Right ventricle myocardium inferior (tissue), 1 donor: ENCODE measurements at regions of chr6 and their contacts with region 1.

Region 1: DNA sequence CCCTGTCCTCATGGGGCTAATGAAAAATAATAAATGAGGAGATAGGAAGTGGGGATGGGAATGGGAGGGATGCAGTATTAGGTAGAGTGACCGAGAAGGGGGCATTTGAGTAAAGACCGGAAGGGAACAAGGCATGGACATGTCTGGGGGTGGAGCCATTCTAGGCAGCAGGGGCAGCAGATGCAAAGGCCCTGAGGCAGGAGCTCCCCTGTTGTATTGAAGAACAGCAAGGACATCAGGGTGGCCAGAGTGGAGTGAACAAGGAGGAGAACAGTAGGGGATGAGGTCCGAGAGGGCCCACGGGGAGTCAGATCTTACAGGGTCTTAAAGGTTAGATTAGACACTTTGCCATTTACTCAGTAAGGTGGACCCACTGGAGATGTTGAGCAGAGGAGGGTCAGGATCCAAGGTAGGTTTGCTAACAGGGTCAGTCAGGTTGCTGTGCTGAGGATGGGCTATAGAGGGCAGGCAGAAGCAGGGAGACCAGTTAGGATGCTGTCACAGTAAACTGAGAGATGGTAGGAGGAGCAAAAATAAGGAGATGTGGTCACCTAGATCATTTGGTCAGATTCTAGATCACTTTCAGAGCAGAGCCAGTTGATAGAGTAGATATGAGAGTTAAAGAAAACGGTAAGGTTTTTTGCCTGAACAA is 18.7 kb downstream of the TAF8 start:
- DNase-seq: no peak
- ATAC-seq: no peak

Region 2: DNA sequence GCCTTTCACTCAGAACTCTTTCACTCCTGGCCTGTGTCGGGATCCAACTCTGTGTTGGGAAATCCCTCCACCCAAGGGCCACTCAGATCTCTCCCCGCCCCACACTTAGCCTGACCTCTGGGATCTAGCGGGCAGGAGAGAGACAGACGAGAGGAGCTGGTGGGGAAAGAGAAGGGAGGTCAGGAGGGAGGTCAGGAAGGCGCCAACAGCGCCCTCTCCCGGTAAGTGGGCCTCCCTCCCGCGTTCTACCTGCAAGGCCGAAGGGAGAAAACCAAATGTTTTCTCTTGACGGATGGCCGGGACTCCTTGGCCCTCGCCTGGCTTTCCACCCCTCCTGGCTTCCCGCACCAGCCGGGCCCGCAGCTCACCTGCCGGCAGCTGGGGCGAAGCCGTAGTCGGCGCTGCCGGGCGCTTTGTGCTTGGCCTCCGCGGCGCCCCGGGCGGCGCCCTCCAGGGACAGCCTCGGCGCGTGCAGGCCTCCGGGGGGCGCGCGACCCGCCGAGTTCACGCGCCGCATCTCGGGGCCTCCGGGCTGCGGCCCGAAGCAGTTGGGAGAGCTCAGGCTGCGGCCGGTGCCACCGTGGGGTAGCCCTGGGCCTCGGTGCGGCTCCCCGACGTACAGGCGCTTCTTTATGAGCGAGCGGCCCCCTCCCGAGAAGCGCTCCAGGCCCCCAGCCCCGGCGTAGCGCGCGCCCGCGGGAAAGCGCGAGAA is 35.3 kb after region 1 on chr6:
- intact Hi-C with region 1: loop called (anchors 5 kb)
- DNase-seq: peak; percentile 87
- ATAC-seq: peak; percentile 93